Activated CD8-positive, alpha-beta memory T cell treated with anti-CD3 and anti-CD28 coated beads, Interleukin-2, amount 10 ng/mL, durations not matched to agents 7 days and 5 days (primary cell): ENCODE measurements at regions of chr16 and their contacts with region 1.

Region 1: GRCh38 chr16:30142672-30143346 is 19.8 kb upstream of the MAPK3 start:
- DNase-seq: peak; percentile 58
- ATAC-seq: peak; percentile 96
- H3K4me3 Mint-ChIP-seq: no peak overlapping the region
- H3K27ac Mint-ChIP-seq: peak overlapping the region; percentile 47
- H3K4me1 Mint-ChIP-seq: peaks cover 31% of the 10 kb centered on the region
- H3K27me3 Mint-ChIP-seq: no peaks in the 10 kb centered on the region

Region 2: GRCh38 chr16:30131869-30132475 is 10.8 kb before region 1 on chr16:
- CTCF ChIA-PET with region 1: interaction called, 13 read pairs
- DNase-seq: no peak
- ATAC-seq: no peak
- H3K4me3 Mint-ChIP-seq: no peak overlapping the region
- H3K27ac Mint-ChIP-seq: peak overlapping the region; percentile 77
- H3K4me1 Mint-ChIP-seq: peaks cover 31% of the 10 kb centered on the region
- H3K27me3 Mint-ChIP-seq: no peaks in the 10 kb centered on the region

Region 3: GRCh38 chr16:30183233-30184095 is 40.7 kb after region 1 on chr16 and contains the start of gene CORO1A:
- CTCF ChIA-PET with region 1: interaction called, 35 read pairs
- DNase-seq: peak; percentile 93
- ATAC-seq: peak; percentile 59
- H3K4me3 Mint-ChIP-seq: peak within 1 kb of the TSS; percentile 100
- H3K27ac Mint-ChIP-seq: peak within 1 kb of the TSS; percentile 100
- H3K4me1 Mint-ChIP-seq: peaks cover 30% of the 10 kb centered on the region
- H3K27me3 Mint-ChIP-seq: no peaks in the 10 kb centered on the region
- total RNA-seq, gene CORO1A: 1,639 to 1,875 TPM